ENCODE measurements at regions of chr10 and their contacts with region 1.

Region 1: GRCh38 chr10:17228091-17228940 is at the start of gene VIM:
- DNase-seq: peak; percentile 90 to 96 (median 94)
- H3K4me3 ChIP-seq: peak within 1 kb of the TSS; percentile 64
- H3K27ac ChIP-seq: peak within 1 kb of the TSS; percentile 96 to 99
- H3K4me1 ChIP-seq: peaks cover 8% of the 10 kb centered on the region
- H3K27me3 ChIP-seq: no peaks in the 10 kb centered on the region
- CTCF ChIP-seq: no peak
- EP300 ChIP-seq: peak; percentile 40
- POLR2A ChIP-seq: peak; percentile 48
- total RNA-seq, gene VIM: 2,370 to 5,934 (median 4,198) TPM

Region 2: DNA sequence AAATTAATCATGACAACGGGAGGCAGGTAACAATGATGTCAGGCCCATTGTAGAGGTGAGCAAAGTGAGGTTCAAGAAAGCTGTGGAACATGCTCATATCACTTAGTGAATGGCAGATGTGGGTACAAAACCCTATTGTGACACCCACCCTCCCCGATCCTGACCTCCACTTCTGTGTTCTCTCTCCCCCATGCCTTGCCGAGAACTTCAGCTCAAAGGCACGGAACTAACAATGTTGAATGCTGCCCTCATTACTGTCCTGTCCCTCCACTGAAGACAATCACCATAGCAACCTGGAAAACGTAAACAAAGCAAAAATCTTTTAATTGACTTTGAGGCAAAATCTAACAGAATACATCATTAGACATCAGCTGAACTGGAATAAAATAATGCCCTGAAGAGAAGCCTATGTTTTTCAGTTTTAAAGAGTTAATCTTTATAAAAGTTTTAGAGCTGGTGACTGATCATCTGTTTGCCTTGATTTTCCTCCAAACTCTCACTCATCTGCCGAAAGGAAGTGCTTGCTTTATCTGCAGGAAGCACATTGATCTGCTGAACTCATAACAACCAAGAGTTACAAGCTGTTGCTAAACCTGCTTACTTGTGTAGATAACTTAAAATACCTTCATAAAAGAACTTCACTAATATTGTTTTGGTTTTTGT is 232.3 kb before region 1 on chr10:
- intact Hi-C with region 1: loop called in 2 of 4 experiments (anchors 5 to 10 kb)
- DNase-seq: no peak
- H3K4me3 ChIP-seq: no peak overlapping the region
- H3K27ac ChIP-seq: peak overlapping the region in 1 of 2 donors; percentile 43
- H3K4me1 ChIP-seq: peaks cover 13% of the 10 kb centered on the region
- H3K27me3 ChIP-seq: no peaks in the 10 kb centered on the region
- CTCF ChIP-seq: no peak
- EP300 ChIP-seq: no peak
- POLR2A ChIP-seq: no peak

Region 3: DNA sequence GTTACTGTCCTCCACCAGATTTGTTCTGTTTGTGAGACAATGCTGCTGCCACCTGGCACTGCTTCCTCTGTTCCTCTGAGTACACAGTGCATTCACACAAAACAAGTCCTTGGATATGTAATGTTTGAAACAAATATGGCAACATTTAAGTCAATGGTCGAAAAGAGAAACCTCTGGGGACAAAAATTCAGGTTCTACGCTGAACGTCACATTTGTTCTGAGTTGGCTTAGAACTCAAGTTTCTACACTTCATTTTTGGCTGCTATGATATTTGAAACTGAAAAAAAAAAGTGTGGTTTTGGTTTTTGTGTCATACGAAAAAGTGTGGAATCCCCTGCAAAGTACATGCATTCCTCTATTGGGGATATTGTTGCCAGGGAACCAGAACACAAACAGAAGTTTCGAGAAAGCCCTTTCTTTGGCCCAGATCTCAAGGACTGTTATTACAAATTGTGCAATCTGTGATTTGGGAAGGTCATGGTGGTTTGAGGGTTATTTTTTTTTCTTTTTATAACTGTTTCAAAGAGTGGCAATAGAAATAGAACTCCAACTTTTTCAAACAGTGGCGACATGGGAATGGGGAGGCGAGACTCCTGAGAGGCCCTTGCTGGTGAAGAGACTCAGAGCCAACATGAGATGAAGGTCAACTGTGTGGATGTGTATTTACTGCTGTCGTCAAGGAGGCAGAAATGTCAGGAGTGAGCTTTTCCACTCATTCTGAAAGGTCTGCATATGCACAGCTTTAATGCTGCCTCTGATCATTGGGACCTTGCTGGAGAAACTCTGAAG is 226.2 kb before region 1 on chr10:
- intact Hi-C with region 1: loop called in 2 of 4 experiments (anchors 5 to 10 kb)
- DNase-seq: peak; percentile 63 to 82 (median 70)
- H3K4me3 ChIP-seq: no peak overlapping the region
- H3K27ac ChIP-seq: peak overlapping the region; percentile 11 to 95
- H3K4me1 ChIP-seq: peaks cover 26% of the 10 kb centered on the region
- H3K27me3 ChIP-seq: no peaks in the 10 kb centered on the region
- CTCF ChIP-seq: no peak
- EP300 ChIP-seq: peak; percentile 78
- POLR2A ChIP-seq: no peak

Region 4: GRCh38 chr10:17101257-17101909 is 126.9 kb before region 1 on chr10:
- intact Hi-C with region 1: loop called in 1 of 4 experiments (anchors 5 kb)
- DNase-seq: no peak
- H3K4me3 ChIP-seq: no peak overlapping the region
- H3K27ac ChIP-seq: no peak overlapping the region
- H3K4me1 ChIP-seq: no peaks in the 10 kb centered on the region
- H3K27me3 ChIP-seq: no peaks in the 10 kb centered on the region
- CTCF ChIP-seq: no peak
- EP300 ChIP-seq: no peak
- POLR2A ChIP-seq: no peak

Region 5: GRCh38 chr10:17169803-17170202 is 58.5 kb before region 1 on chr10:
- intact Hi-C with region 1: no loop called
- DNase-seq: no peak
- H3K4me3 ChIP-seq: no peak overlapping the region
- H3K27ac ChIP-seq: peak overlapping the region in 1 of 2 donors; percentile 74
- H3K4me1 ChIP-seq: peaks cover 3% of the 10 kb centered on the region
- H3K27me3 ChIP-seq: no peaks in the 10 kb centered on the region
- CTCF ChIP-seq: no peak
- EP300 ChIP-seq: no peak
- POLR2A ChIP-seq: no peak

Region 6: GRCh38 chr10:17200912-17201793 is 27.2 kb before region 1 on chr10 and contains the start of gene TRDMT1:
- intact Hi-C with region 1: loop called in 2 of 4 experiments (anchors 2 kb)
- DNase-seq: peak; percentile 87 to 92 (median 89)
- H3K4me3 ChIP-seq: peak within 1 kb of the TSS; percentile 65
- H3K27ac ChIP-seq: peak within 1 kb of the TSS; percentile 87 to 91
- H3K4me1 ChIP-seq: no peaks in the 10 kb centered on the region
- H3K27me3 ChIP-seq: no peaks in the 10 kb centered on the region
- CTCF ChIP-seq: peak in 1 of 3 donors; percentile 27
- EP300 ChIP-seq: peak; percentile 24
- POLR2A ChIP-seq: peak; percentile 91
- total RNA-seq, gene TRDMT1: 13.1 to 24.3 (median 17.9) TPM

Region 7: GRCh38 chr10:17548770-17549169 is 320.5 kb after region 1 on chr10:
- intact Hi-C with region 1: no loop called
- DNase-seq: no peak
- H3K4me3 ChIP-seq: no peak overlapping the region
- H3K27ac ChIP-seq: no peak overlapping the region
- H3K4me1 ChIP-seq: no peaks in the 10 kb centered on the region
- H3K27me3 ChIP-seq: no peaks in the 10 kb centered on the region
- CTCF ChIP-seq: no peak
- EP300 ChIP-seq: no peak
- POLR2A ChIP-seq: no peak

Measured in ovary (tissue), 10 donors.